ENCODE measurements at regions of chr5 and their contacts with region 1.

Region 1: DNA sequence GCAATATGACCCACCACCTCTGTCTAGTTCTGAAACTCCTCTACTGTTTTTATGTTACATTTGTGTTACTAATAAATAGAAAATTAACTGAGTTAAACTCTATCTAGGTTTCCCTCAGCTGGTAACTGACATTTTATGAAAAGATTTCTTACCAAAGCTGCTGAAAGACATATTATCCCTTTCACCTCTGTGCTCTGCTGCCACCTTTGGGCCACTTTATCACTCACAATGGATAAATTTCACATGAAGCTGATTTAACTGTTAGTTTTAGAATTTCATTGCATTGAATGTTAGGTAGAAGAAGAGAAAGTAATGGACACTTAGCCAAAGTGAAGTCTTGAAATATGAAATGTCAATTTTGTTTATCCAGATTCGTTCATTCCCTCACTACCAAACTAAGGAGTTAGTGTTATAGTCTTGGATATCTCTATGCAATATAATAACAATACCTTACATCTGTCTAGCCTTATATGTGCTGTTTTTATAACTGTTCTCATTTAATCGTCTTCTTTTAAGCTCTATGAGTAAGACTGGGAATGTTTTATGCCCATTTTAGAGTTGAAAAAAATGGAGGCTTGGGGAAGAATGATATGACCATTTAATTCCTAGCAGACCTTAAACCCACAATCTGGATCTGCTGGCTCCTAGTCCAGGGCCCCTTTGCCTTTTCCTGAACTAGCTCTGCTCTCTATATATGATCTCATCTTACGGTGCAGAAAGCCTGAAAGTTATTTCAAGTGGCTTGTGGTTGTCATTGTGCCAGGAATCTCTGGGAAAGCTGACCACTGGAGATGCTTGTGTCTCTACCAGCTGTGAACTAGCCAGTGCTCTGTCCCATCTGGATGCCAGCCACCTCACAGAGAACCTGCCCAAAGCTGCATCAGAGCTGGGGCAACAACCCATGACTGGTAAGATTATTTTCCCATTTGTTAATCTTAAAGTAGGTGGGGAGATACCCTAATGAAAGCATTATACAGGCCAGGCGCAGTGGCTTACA is 97.1 kb downstream of the GOLPH3 start:
- DNase-seq: peak; percentile 38
- ATAC-seq: peak; percentile 73; the same call in 1 of the 2 replicates
- H3K4me3 ChIP-seq: no peak overlapping the region
- H3K27ac ChIP-seq: no peak overlapping the region
- H3K4me1 ChIP-seq: no peaks in the 10 kb centered on the region
- H3K27me3 ChIP-seq: no peaks in the 10 kb centered on the region
- CTCF ChIP-seq: peak; percentile 79; the same call in 1 of the 2 replicates

Region 2: DNA sequence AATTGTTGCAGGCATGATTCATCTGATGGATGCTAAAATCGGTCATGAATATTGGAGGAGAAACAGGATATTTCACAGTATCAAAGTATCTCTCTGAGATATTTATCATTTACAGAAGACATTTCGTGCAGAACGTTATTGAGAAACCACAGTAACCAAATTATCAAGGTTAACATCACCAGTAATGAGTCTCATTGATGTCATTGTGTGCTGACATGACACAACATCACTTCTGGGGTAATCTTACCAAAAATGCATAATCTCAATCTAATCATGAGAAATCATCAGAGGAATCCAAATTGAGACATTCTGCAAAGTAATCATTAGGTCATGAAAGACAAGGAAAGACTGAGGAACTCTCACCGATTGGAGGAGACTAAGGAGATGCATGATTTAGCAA is 502.2 kb before region 1 on chr5:
- CTCF ChIA-PET with region 1: no interaction called
- POLR2A ChIA-PET with region 1: no interaction called
- in situ Hi-C with region 1: no loop called
- intact Hi-C with region 1: loop called (anchors 5 kb)
- DNase-seq: no peak
- ATAC-seq: no peak
- H3K4me3 ChIP-seq: no peak overlapping the region
- H3K27ac ChIP-seq: no peak overlapping the region
- H3K4me1 ChIP-seq: no peaks in the 10 kb centered on the region
- H3K27me3 ChIP-seq: peaks cover 14% of the 10 kb centered on the region
- CTCF ChIP-seq: no peak

Region 3: GRCh38 chr5:31614151-31615020 is 462.6 kb before region 1 on chr5:
- CTCF ChIA-PET with region 1: no interaction called
- POLR2A ChIA-PET with region 1: interaction called, 16 read pairs
- in situ Hi-C with region 1: no loop called
- intact Hi-C with region 1: no loop called
- DNase-seq: no peak
- ATAC-seq: no peak
- H3K4me3 ChIP-seq: no peak overlapping the region
- H3K27ac ChIP-seq: no peak overlapping the region
- H3K4me1 ChIP-seq: no peaks in the 10 kb centered on the region; the same call in 1 of the 2 replicates
- H3K27me3 ChIP-seq: no peaks in the 10 kb centered on the region; the same call in none of the 2 replicates
- CTCF ChIP-seq: no peak

Region 4: DNA sequence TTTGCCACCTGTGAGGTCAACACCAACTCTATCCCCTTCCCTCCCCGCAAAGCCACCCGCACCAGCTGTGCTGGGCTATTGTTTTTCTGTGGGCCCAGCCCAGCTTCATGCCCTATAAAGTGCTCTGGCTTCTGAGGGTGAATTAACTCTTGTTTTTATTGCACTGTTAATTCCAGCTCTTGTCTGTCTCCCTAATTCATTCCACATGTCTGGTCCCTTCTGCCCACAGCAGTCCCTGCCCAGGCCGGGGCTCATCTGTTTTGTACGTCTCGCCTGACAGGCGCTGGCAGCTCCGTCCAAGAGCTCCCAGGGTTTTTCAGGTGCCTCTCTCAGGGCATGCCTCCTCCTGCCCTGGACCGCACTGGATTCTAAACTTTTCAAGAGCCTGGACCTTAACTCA is 319.2 kb before region 1 on chr5:
- CTCF ChIA-PET with region 1: no interaction called
- POLR2A ChIA-PET with region 1: no interaction called
- in situ Hi-C with region 1: no loop called
- intact Hi-C with region 1: no loop called
- DNase-seq: no peak
- ATAC-seq: no peak
- H3K4me3 ChIP-seq: no peak overlapping the region
- H3K27ac ChIP-seq: no peak overlapping the region
- H3K4me1 ChIP-seq: no peaks in the 10 kb centered on the region
- H3K27me3 ChIP-seq: 0 out of 2 replicates have a peak, but pooled peaks cover 6% of the 10 kb centered on the region
- CTCF ChIP-seq: no peak

Region 5: GRCh38 chr5:31825518-31826068 is 251.4 kb before region 1 on chr5:
- CTCF ChIA-PET with region 1: interaction called, 17 read pairs
- POLR2A ChIA-PET with region 1: no interaction called
- in situ Hi-C with region 1: no loop called
- intact Hi-C with region 1: loop called (anchors 1 kb)
- DNase-seq: peak; percentile 58
- ATAC-seq: peak; percentile 95
- H3K4me3 ChIP-seq: no peak overlapping the region
- H3K27ac ChIP-seq: no peak overlapping the region
- H3K4me1 ChIP-seq: no peaks in the 10 kb centered on the region
- H3K27me3 ChIP-seq: peaks cover 15% of the 10 kb centered on the region
- CTCF ChIP-seq: peak; percentile 80

Region 6: DNA sequence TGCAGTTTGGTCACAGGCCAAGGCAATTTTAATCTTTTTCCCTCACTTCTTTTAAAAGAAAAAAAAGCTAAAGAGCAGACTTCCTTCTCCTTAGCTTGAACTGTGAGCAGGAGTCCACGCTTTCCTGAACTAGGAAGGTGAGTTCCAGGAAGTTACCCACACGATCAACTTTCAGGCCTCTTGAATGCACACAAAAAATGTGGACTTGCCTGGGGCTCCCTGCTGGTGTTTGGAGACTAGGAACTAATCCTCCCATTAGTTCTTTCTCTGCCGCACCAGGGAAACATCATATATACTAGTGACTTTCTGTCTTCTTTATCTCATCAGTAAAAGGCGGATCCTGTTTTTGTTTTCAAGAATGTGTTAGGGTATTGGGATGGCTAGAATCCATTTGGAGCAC is 142.8 kb before region 1 on chr5:
- CTCF ChIA-PET with region 1: interaction called, 5 read pairs
- POLR2A ChIA-PET with region 1: no interaction called
- in situ Hi-C with region 1: no loop called
- intact Hi-C with region 1: loop called (anchors 2 kb)
- DNase-seq: no peak
- ATAC-seq: no peak
- H3K4me3 ChIP-seq: no peak overlapping the region
- H3K27ac ChIP-seq: no peak overlapping the region
- H3K4me1 ChIP-seq: no peaks in the 10 kb centered on the region
- H3K27me3 ChIP-seq: peaks cover 5% of the 10 kb centered on the region
- CTCF ChIP-seq: no peak

Region 7: GRCh38 chr5:32261198-32261597 is 184.2 kb after region 1 on chr5:
- CTCF ChIA-PET with region 1: interaction called, 12 read pairs
- POLR2A ChIA-PET with region 1: no interaction called
- in situ Hi-C with region 1: no loop called
- intact Hi-C with region 1: no loop called
- DNase-seq: no peak
- ATAC-seq: no peak
- H3K4me3 ChIP-seq: no peak overlapping the region
- H3K27ac ChIP-seq: no peak overlapping the region
- H3K4me1 ChIP-seq: no peaks in the 10 kb centered on the region
- H3K27me3 ChIP-seq: no peaks in the 10 kb centered on the region
- CTCF ChIP-seq: no peak

Measured in Panc1 (cell line).